Panc1 (cell line): ENCODE measurements at regions of chr21 and their contacts with region 1.

Region 1: DNA sequence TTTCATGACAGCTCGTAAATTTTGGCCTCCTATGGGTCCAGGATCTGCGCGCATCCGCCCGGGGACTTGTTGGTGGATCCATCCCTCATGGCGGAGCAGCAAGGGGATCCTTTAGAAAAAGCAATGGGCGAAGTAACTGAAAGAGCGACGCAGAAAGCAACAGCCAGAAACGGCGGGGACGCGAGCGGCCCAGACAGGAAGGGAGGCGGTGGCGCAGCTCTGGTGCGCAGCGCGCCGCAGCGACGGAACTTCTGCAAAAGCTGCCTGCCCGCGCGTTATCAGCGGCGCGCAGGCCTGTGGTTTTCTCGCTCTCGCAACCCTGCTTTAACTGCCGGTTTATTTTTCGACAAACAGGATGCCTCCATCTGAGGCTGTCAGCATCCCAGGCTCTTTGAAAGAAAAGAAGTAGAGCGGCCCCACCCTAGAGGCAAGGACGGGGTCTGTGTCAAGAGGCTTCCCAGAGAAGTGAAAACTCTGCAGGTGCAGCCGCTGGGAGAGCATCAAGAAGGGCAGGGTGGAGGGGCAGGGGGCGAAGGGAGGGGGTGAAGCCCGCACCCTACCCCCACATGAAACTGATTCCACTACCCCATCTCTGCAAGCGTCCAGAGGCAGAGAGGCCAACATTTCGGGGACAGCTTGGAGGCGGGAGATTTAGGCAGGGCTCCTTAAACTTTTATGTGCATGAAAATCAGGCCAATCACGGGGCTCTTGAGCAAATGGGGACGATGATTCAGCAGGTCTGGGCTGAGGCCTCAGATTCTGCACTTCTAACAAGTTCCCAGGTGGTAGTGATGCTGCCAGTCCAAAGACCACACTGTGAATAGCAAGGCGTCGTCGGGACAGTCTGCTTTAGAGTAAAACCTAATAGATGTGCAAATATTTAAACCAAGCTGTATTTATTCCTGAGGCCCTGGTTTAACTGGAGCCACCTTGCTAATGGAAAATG is 22.2 kb downstream of the RUNX1 start:
- DNase-seq: no peak
- ATAC-seq: peak; percentile 85
- H3K4me3 ChIP-seq: peak overlapping the region; percentile 19 to 38
- H3K27ac ChIP-seq: no peak overlapping the region
- H3K4me1 ChIP-seq: no peaks in the 10 kb centered on the region
- H3K27me3 ChIP-seq: no peaks in the 10 kb centered on the region
- CTCF ChIP-seq: no peak

Region 2: GRCh38 chr21:35014302-35015041 is 12.4 kb before region 1 on chr21:
- CTCF ChIA-PET with region 1: no interaction called
- POLR2A ChIA-PET with region 1: no interaction called
- in situ Hi-C with region 1: no loop called
- intact Hi-C with region 1: loop called (anchors 1 kb)
- DNase-seq: no peak
- ATAC-seq: no peak
- H3K4me3 ChIP-seq: no peak overlapping the region
- H3K27ac ChIP-seq: no peak overlapping the region
- H3K4me1 ChIP-seq: no peaks in the 10 kb centered on the region
- H3K27me3 ChIP-seq: no peaks in the 10 kb centered on the region
- CTCF ChIP-seq: no peak

Region 3: GRCh38 chr21:35239811-35240219 is 212.9 kb after region 1 on chr21:
- CTCF ChIA-PET with region 1: no interaction called
- POLR2A ChIA-PET with region 1: no interaction called
- in situ Hi-C with region 1: no loop called
- intact Hi-C with region 1: no loop called
- DNase-seq: no peak
- ATAC-seq: no peak
- H3K4me3 ChIP-seq: peak overlapping the region in 1 of 2 experiments; percentile 6; a peak in 1 of 4 replicates
- H3K27ac ChIP-seq: no peak overlapping the region
- H3K4me1 ChIP-seq: no peaks in the 10 kb centered on the region
- H3K27me3 ChIP-seq: no peaks in the 10 kb centered on the region
- CTCF ChIP-seq: no peak